ENCODE measurements at regions of chrX and their contacts with region 1.

Region 1: GRCh38 chrX:18899796-18900447 is 84.0 kb downstream of the PHKA2 start:
- DNase-seq: no peak
- H3K4me3 ChIP-seq: no peak overlapping the region
- H3K27ac ChIP-seq: no peak overlapping the region
- H3K4me1 ChIP-seq: peaks cover 13% of the 10 kb centered on the region
- H3K27me3 ChIP-seq: no peaks in the 10 kb centered on the region
- CTCF ChIP-seq: peak in 1 of 2 donors; percentile 30

Region 2: GRCh38 chrX:18674788-18675735 is 224.9 kb before region 1 on chrX:
- CTCF ChIA-PET with region 1: interaction called, 34 read pairs
- dilution Hi-C with region 1: no loop called
- in situ Hi-C with region 1: no loop called
- intact Hi-C with region 1: loop called (anchors 1 kb)
- DNase-seq: peak; percentile 53
- H3K4me3 ChIP-seq: peak overlapping the region; percentile 57 to 66 (median 60)
- H3K27ac ChIP-seq: peak overlapping the region; percentile 20
- H3K4me1 ChIP-seq: no peaks in the 10 kb centered on the region
- H3K27me3 ChIP-seq: no peaks in the 10 kb centered on the region
- CTCF ChIP-seq: no peak

Region 3: GRCh38 chrX:18983666-18984380 is 83.9 kb after region 1 on chrX and contains the start of gene PHKA2:
- CTCF ChIA-PET with region 1: no interaction called
- dilution Hi-C with region 1: no loop called
- in situ Hi-C with region 1: no loop called
- intact Hi-C with region 1: no loop called
- DNase-seq: peak; percentile 62
- H3K4me3 ChIP-seq: peak within 1 kb of the TSS; percentile 71 to 79 (median 73)
- H3K27ac ChIP-seq: peak within 1 kb of the TSS; percentile 57
- H3K4me1 ChIP-seq: no peaks in the 10 kb centered on the region
- H3K27me3 ChIP-seq: no peaks in the 10 kb centered on the region
- CTCF ChIP-seq: no peak
- total RNA-seq, gene PHKA2: 18.0 to 23.0 TPM

Measured in mammary epithelial cell (primary cell).